Activated naive CD8-positive, alpha-beta T cell treated with anti-CD3 and anti-CD28 coated beads, Interleukin-2, amount 10 ng/mL, durations not matched to agents 7 days and 5 days (primary cell): ENCODE measurements at regions of chr14 and their contacts with region 1.

Region 1: GRCh38 chr14:51846631-51847488 is 13.6 kb upstream of the GNG2 start:
- DNase-seq: peak; percentile 83
- ATAC-seq: peak; percentile 90
- H3K4me3 Mint-ChIP-seq: peak overlapping the region; percentile 78
- H3K27ac Mint-ChIP-seq: peak overlapping the region; percentile 93
- H3K4me1 Mint-ChIP-seq: peaks cover 45% of the 10 kb centered on the region
- H3K27me3 Mint-ChIP-seq: no peaks in the 10 kb centered on the region

Region 2: GRCh38 chr14:51828017-51828797 is 18.7 kb before region 1 on chr14:
- POLR2A ChIA-PET with region 1: interaction called, 19 read pairs
- DNase-seq: peak; percentile 67
- ATAC-seq: peak; percentile 98
- H3K4me3 Mint-ChIP-seq: peak overlapping the region; percentile 26
- H3K27ac Mint-ChIP-seq: no peak overlapping the region
- H3K4me1 Mint-ChIP-seq: peaks cover 4% of the 10 kb centered on the region
- H3K27me3 Mint-ChIP-seq: peaks cover 2% of the 10 kb centered on the region

Region 3: DNA sequence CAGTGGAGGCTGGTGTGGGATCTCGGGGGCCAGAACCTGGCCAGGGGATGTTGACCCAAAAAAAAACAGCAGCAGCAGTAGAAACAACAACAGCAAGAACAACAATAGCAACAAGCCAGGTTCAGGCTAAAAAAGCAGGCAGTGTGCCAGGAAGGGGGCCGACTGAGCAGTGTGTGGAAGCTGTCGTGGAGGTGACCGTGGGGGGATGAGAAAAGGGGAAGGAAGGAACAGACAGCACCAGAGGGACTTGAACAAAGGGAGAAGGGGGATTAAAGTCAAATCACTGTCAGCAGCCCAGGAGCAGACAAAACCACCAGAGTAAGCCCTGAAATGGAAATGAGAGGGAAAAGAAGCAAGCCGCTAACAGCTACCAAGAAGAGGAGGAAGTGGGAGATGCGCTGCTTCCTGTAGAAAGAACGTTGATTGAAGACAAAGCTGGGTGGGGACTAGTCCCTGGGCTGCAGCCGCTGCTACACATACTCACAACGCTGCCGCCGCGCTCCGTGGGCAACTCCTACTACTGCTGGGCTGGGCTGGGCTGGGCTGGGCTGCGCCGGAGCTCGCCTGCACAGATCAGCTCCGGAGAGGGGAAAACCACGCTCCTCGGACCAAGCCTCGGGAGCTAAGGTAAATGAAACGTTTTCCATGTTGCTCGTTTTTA is 13.4 kb after region 1 on chr14 and contains the start of gene GNG2:
- POLR2A ChIA-PET with region 1: interaction called, 257 read pairs
- DNase-seq: peak; percentile 82
- ATAC-seq: peak; percentile 98
- H3K4me3 Mint-ChIP-seq: peak within 1 kb of the TSS; percentile 97
- H3K27ac Mint-ChIP-seq: peak within 1 kb of the TSS; percentile 88
- H3K4me1 Mint-ChIP-seq: peaks cover 48% of the 10 kb centered on the region
- H3K27me3 Mint-ChIP-seq: no peaks in the 10 kb centered on the region
- total RNA-seq, gene GNG2: 247 to 253 TPM

Region 4: GRCh38 chr14:51884086-51884927 is 37.4 kb after region 1 on chr14:
- POLR2A ChIA-PET with region 1: interaction called, 12 read pairs
- DNase-seq: no peak
- ATAC-seq: peak; percentile 64
- H3K4me3 Mint-ChIP-seq: peak overlapping the region; percentile 47
- H3K27ac Mint-ChIP-seq: peak overlapping the region; percentile 31
- H3K4me1 Mint-ChIP-seq: peaks cover 48% of the 10 kb centered on the region
- H3K27me3 Mint-ChIP-seq: no peaks in the 10 kb centered on the region